Activated CD8-positive, alpha-beta T cell treated with anti-CD3 and anti-CD28 coated beads, Interleukin-2, amount 10 ng/mL, durations not matched to agents 7 days and 5 days (primary cell): ENCODE measurements at regions of chr10 and their contacts with region 1.

Region 1: GRCh38 chr10:93376372-93377293 is 105.5 kb downstream of the MYOF start:
- DNase-seq: peak; percentile 69
- ATAC-seq: peak; percentile 70
- H3K4me3 Mint-ChIP-seq: no peak overlapping the region
- H3K27ac Mint-ChIP-seq: no peak overlapping the region
- H3K4me1 Mint-ChIP-seq: peaks cover 15% of the 10 kb centered on the region
- H3K27me3 Mint-ChIP-seq: no peaks in the 10 kb centered on the region

Region 2: GRCh38 chr10:93352638-93353383 is 23.8 kb before region 1 on chr10:
- CTCF ChIA-PET with region 1: interaction called, 27 read pairs
- POLR2A ChIA-PET with region 1: no interaction called
- DNase-seq: no peak
- ATAC-seq: no peak
- H3K4me3 Mint-ChIP-seq: no peak overlapping the region
- H3K27ac Mint-ChIP-seq: no peak overlapping the region
- H3K4me1 Mint-ChIP-seq: peaks cover 3% of the 10 kb centered on the region
- H3K27me3 Mint-ChIP-seq: no peaks in the 10 kb centered on the region

Region 3: DNA sequence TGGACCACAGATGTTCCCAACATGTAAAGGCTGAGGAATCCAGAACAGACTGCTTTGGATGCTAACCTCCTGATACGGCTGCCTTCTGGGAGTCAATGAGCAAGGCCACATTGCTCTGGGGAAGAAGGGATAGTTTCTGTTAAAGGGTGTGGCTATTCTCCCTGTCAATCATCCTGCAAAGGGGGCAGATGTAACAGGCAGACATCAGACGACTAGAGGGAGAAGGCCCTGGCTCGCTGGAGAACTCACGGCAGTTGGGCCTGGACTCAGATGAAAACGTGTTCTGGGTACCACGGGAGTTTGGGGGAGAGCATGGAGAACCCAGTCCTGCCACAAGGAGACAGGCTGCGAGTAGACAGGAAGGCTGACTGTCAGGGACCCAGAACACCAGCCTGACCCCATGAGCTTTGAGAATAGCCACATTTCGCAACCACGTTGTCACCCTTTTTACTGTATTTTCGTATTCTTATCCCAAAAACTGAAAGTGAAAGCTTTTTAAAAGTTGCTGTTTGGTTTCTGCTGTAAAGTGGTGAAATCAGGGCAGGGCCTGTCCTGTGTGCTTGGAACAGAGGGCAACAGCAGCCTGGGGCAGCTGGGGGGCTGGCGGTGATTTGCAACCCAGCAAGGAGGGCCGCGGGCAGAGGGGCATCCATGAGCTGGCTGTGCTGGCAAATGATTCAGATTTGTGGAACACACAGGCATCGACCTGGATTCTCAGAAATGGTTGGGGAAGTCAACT is 10.2 kb after region 1 on chr10:
- CTCF ChIA-PET with region 1: interaction called, 66 read pairs
- POLR2A ChIA-PET with region 1: no interaction called
- DNase-seq: peak; percentile 54
- ATAC-seq: peak; percentile 74
- H3K4me3 Mint-ChIP-seq: no peak overlapping the region
- H3K27ac Mint-ChIP-seq: peak overlapping the region; percentile 81
- H3K4me1 Mint-ChIP-seq: peaks cover 26% of the 10 kb centered on the region
- H3K27me3 Mint-ChIP-seq: no peaks in the 10 kb centered on the region

Region 4: GRCh38 chr10:93440591-93441091 is 64.0 kb after region 1 on chr10:
- CTCF ChIA-PET with region 1: interaction called, 19 read pairs
- POLR2A ChIA-PET with region 1: no interaction called
- DNase-seq: no peak
- ATAC-seq: no peak
- H3K4me3 Mint-ChIP-seq: no peak overlapping the region
- H3K27ac Mint-ChIP-seq: no peak overlapping the region
- H3K4me1 Mint-ChIP-seq: no peaks in the 10 kb centered on the region
- H3K27me3 Mint-ChIP-seq: no peaks in the 10 kb centered on the region

Region 5: GRCh38 chr10:93471110-93471651 is 94.5 kb after region 1 on chr10:
- CTCF ChIA-PET with region 1: interaction called, 33 read pairs
- POLR2A ChIA-PET with region 1: no interaction called
- DNase-seq: no peak
- ATAC-seq: no peak
- H3K4me3 Mint-ChIP-seq: no peak overlapping the region
- H3K27ac Mint-ChIP-seq: no peak overlapping the region
- H3K4me1 Mint-ChIP-seq: no peaks in the 10 kb centered on the region
- H3K27me3 Mint-ChIP-seq: no peaks in the 10 kb centered on the region

Region 6: GRCh38 chr10:93496322-93497041 is 119.8 kb after region 1 on chr10 and contains the start of gene CEP55:
- CTCF ChIA-PET with region 1: interaction called, 183 read pairs
- POLR2A ChIA-PET with region 1: interaction called, 3 read pairs
- DNase-seq: peak; percentile 96
- ATAC-seq: peak; percentile 99
- H3K4me3 Mint-ChIP-seq: peak within 1 kb of the TSS; percentile 82
- H3K27ac Mint-ChIP-seq: peak within 1 kb of the TSS; percentile 89
- H3K4me1 Mint-ChIP-seq: peaks cover 40% of the 10 kb centered on the region
- H3K27me3 Mint-ChIP-seq: peaks cover 15% of the 10 kb centered on the region
- total RNA-seq, gene CEP55: 81.1 TPM